Vagina (tissue), 2 donors: ENCODE measurements at regions of chr2 and their contacts with region 1.

Region 1: GRCh38 chr2:70310899-70311298 is 9.0 kb upstream of the FAM136A start:
- DNase-seq: no peak
- H3K4me3 ChIP-seq: no peak overlapping the region
- H3K27ac ChIP-seq: no peak overlapping the region
- H3K4me1 ChIP-seq: no peaks in the 10 kb centered on the region
- H3K27me3 ChIP-seq: no peaks in the 10 kb centered on the region
- CTCF ChIP-seq: no peak
- POLR2A ChIP-seq: no peak

Region 2: DNA sequence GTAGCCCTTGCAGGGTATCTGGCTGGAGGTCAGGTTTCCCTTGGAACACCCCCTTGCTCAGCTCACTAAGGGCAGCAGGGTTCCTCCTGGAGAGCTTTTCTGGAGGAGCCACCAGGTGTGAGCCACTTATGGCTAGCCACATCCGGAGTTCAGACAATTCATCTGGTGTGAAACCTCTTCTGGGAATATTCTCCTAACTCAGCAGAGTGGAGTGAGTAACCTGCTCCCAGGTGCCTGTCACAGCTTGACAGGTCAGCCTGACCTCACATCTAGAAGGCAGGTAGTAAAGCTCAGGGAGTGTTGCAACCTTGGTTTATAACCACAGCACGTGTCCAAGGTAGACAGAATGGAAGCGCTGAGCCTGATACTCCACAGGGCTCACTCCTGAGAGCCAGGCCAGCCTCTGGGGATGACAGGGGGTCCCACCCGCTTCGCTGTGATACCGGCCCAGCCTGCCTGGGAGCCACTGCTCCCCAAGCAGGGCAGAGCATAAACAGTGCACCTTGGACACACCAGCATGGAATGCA is 305.3 kb after region 1 on chr2:
- intact Hi-C with region 1: loop called (anchors 10 kb)
- DNase-seq: no peak
- H3K4me3 ChIP-seq: no peak overlapping the region
- H3K27ac ChIP-seq: no peak overlapping the region
- H3K4me1 ChIP-seq: peaks cover 10% of the 10 kb centered on the region
- H3K27me3 ChIP-seq: no peaks in the 10 kb centered on the region
- CTCF ChIP-seq: no peak
- POLR2A ChIP-seq: no peak

Region 3: GRCh38 chr2:71730785-71731383 is 1420.0 kb after region 1 on chr2:
- intact Hi-C with region 1: loop called (anchors 5 kb)
- DNase-seq: peak in 1 of 2 donors; percentile 87
- H3K4me3 ChIP-seq: no peak overlapping the region
- H3K27ac ChIP-seq: no peak overlapping the region
- H3K4me1 ChIP-seq: no peaks in the 10 kb centered on the region
- H3K27me3 ChIP-seq: no peaks in the 10 kb centered on the region
- CTCF ChIP-seq: no peak
- POLR2A ChIP-seq: no peak